IMR-90 (cell line): ENCODE measurements at regions of chr1 and their contacts with region 1.

Region 1: GRCh38 chr1:94061513-94062443 is 59.2 kb downstream of the ABCA4 start:
- DNase-seq: peak; percentile 80
- ATAC-seq: peak; percentile 95
- H3K4me3 ChIP-seq: no peak overlapping the region
- H3K27ac ChIP-seq: peak overlapping the region; percentile 18; the same call in 1 of the 2 replicates
- H3K4me1 ChIP-seq: peaks cover 19% of the 10 kb centered on the region
- H3K27me3 ChIP-seq: no peaks in the 10 kb centered on the region
- CTCF ChIP-seq: peak; percentile 95
- POLR2A ChIP-seq: peak; percentile 49; the same call in 1 of the 2 replicates
- RAD21 ChIP-seq: peak; percentile 95

Region 2: GRCh38 chr1:93878889-93879586 is 182.7 kb before region 1 on chr1 and contains the start of gene DNTTIP2:
- CTCF ChIA-PET with region 1: no interaction called
- POLR2A ChIA-PET with region 1: no interaction called
- dilution Hi-C with region 1: no loop called
- in situ Hi-C with region 1: no loop called
- intact Hi-C with region 1: no loop called
- DNase-seq: peak; percentile 87
- ATAC-seq: peak; percentile 94
- H3K4me3 ChIP-seq: peak within 1 kb of the TSS; percentile 89
- H3K27ac ChIP-seq: peak within 1 kb of the TSS; percentile 99
- H3K4me1 ChIP-seq: no peaks in the 10 kb centered on the region; the same call in 1 of the 2 replicates
- H3K27me3 ChIP-seq: no peaks in the 10 kb centered on the region
- CTCF ChIP-seq: no peak
- POLR2A ChIP-seq: peak; percentile 90
- RAD21 ChIP-seq: no peak
- total RNA-seq, gene DNTTIP2: 24.4 and 35.8 TPM in 2 replicates

Region 3: DNA sequence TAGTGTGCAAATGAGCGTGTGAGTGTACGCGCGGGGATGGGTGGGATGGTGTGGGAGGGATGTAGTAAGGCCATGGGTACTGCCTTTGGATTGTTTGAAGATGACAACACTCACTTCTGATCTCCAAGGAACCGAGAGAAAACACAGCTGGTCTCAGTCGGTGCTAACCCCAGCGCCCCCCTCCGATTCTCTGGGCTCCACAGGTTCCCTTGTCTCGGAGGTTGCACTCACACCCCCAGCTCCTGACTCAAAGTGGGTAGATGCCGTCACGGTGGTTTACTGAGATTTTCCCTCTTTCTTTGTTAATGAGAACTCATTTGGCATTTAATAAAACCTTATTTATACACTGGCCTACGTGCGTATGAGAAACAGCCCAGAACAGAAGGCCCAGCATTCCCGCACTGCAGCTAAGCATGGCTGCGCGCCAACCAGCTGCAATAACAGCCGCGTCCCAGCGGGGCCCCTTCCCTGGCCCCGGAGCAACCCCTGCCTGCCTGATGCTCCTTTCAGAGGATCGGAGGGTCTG is 33.4 kb after region 1 on chr1:
- CTCF ChIA-PET with region 1: interaction called, 10 read pairs
- POLR2A ChIA-PET with region 1: no interaction called
- dilution Hi-C with region 1: no loop called
- in situ Hi-C with region 1: no loop called
- intact Hi-C with region 1: no loop called
- DNase-seq: peak; percentile 95
- ATAC-seq: peak; percentile 65
- H3K4me3 ChIP-seq: no peak overlapping the region
- H3K27ac ChIP-seq: peak overlapping the region; percentile 90
- H3K4me1 ChIP-seq: peaks cover 31% of the 10 kb centered on the region
- H3K27me3 ChIP-seq: no peaks in the 10 kb centered on the region
- CTCF ChIP-seq: no peak
- POLR2A ChIP-seq: no peak
- RAD21 ChIP-seq: no peak

Region 4: GRCh38 chr1:94202241-94202640 is 140.5 kb after region 1 on chr1:
- CTCF ChIA-PET with region 1: no interaction called
- POLR2A ChIA-PET with region 1: no interaction called
- dilution Hi-C with region 1: no loop called
- in situ Hi-C with region 1: no loop called
- intact Hi-C with region 1: no loop called
- DNase-seq: no peak
- ATAC-seq: no peak
- H3K4me3 ChIP-seq: no peak overlapping the region
- H3K27ac ChIP-seq: no peak overlapping the region
- H3K4me1 ChIP-seq: no peaks in the 10 kb centered on the region; the same call in 1 of the 2 replicates
- H3K27me3 ChIP-seq: no peaks in the 10 kb centered on the region
- CTCF ChIP-seq: no peak
- POLR2A ChIP-seq: no peak
- RAD21 ChIP-seq: no peak

Region 5: GRCh38 chr1:94237291-94238226 is 175.8 kb after region 1 on chr1 and contains the start of gene ARHGAP29:
- CTCF ChIA-PET with region 1: interaction called, 3 read pairs
- POLR2A ChIA-PET with region 1: no interaction called
- dilution Hi-C with region 1: no loop called
- in situ Hi-C with region 1: loop called (anchors 10 kb)
- intact Hi-C with region 1: loop called (anchors 2 kb)
- DNase-seq: peak; percentile 50
- ATAC-seq: peak; percentile 96
- H3K4me3 ChIP-seq: peak within 1 kb of the TSS; percentile 60
- H3K27ac ChIP-seq: peak within 1 kb of the TSS; percentile 27
- H3K4me1 ChIP-seq: peaks cover 1% of the 10 kb centered on the region; the same call in 1 of the 2 replicates
- H3K27me3 ChIP-seq: no peaks in the 10 kb centered on the region; the same call in 1 of the 2 replicates
- CTCF ChIP-seq: no peak
- POLR2A ChIP-seq: no peak
- RAD21 ChIP-seq: no peak
- total RNA-seq, gene ARHGAP29: 30.3 and 45.3 TPM in 2 replicates

Region 6: GRCh38 chr1:94329986-94330385 is 268.2 kb after region 1 on chr1:
- CTCF ChIA-PET with region 1: interaction called, 119 read pairs
- POLR2A ChIA-PET with region 1: interaction called, 3 read pairs
- dilution Hi-C with region 1: no loop called
- in situ Hi-C with region 1: loop called (anchors 5 kb)
- intact Hi-C with region 1: loop called (anchors 1 kb)
- DNase-seq: peak; percentile 54
- ATAC-seq: peak; percentile 3; the same call in 1 of the 2 replicates
- H3K4me3 ChIP-seq: no peak overlapping the region
- H3K27ac ChIP-seq: no peak overlapping the region
- H3K4me1 ChIP-seq: peaks cover 29% of the 10 kb centered on the region
- H3K27me3 ChIP-seq: no peaks in the 10 kb centered on the region
- CTCF ChIP-seq: peak; percentile 55
- POLR2A ChIP-seq: no peak
- RAD21 ChIP-seq: peak; percentile 66